PC-9 (cell line): ENCODE measurements at regions of chr9 and their contacts with region 1.

Region 1: GRCh38 chr9:112486221-112487007 is at the start of gene KIAA1958:
- DNase-seq: peak; percentile 71 to 89
- H3K4me3 ChIP-seq: peak within 1 kb of the TSS; percentile 81
- H3K27ac ChIP-seq: 0 out of 2 replicates have a peak within 1 kb of the TSS, but pooled peaks have one; percentile 17
- H3K4me1 ChIP-seq: peaks cover 21% of the 10 kb centered on the region
- H3K27me3 ChIP-seq: no peaks in the 10 kb centered on the region
- CTCF ChIP-seq: no peak
- total RNA-seq, gene KIAA1958: 19.5 and 19.8 TPM in 2 replicates

Region 2: GRCh38 chr9:112050544-112051475 is 435.6 kb before region 1 on chr9:
- CTCF ChIA-PET with region 1: no interaction called
- POLR2A ChIA-PET with region 1: no interaction called
- intact Hi-C with region 1: no loop called
- DNase-seq: no peak
- H3K4me3 ChIP-seq: no peak overlapping the region
- H3K27ac ChIP-seq: no peak overlapping the region
- H3K4me1 ChIP-seq: peaks cover 19% of the 10 kb centered on the region
- H3K27me3 ChIP-seq: no peaks in the 10 kb centered on the region
- CTCF ChIP-seq: no peak

Region 3: GRCh38 chr9:112556497-112557085 is 70.2 kb after region 1 on chr9:
- CTCF ChIA-PET with region 1: no interaction called
- POLR2A ChIA-PET with region 1: no interaction called
- intact Hi-C with region 1: loop called (anchors 2 kb)
- DNase-seq: peak; percentile 64 to 74
- H3K4me3 ChIP-seq: no peak overlapping the region
- H3K27ac ChIP-seq: peak overlapping the region; percentile 49
- H3K4me1 ChIP-seq: peaks cover 27% of the 10 kb centered on the region
- H3K27me3 ChIP-seq: no peaks in the 10 kb centered on the region
- CTCF ChIP-seq: no peak

Region 4: GRCh38 chr9:112629671-112630485 is 143.5 kb after region 1 on chr9:
- CTCF ChIA-PET with region 1: no interaction called
- POLR2A ChIA-PET with region 1: interaction called, 7 read pairs
- intact Hi-C with region 1: loop called (anchors 10 kb)
- DNase-seq: no peak
- H3K4me3 ChIP-seq: no peak overlapping the region
- H3K27ac ChIP-seq: no peak overlapping the region
- H3K4me1 ChIP-seq: no peaks in the 10 kb centered on the region
- H3K27me3 ChIP-seq: no peaks in the 10 kb centered on the region
- CTCF ChIP-seq: no peak

Region 5: GRCh38 chr9:112665347-112665746 is 178.9 kb after region 1 on chr9:
- CTCF ChIA-PET with region 1: no interaction called
- POLR2A ChIA-PET with region 1: no interaction called
- intact Hi-C with region 1: loop called (anchors 10 kb)
- DNase-seq: no peak
- H3K4me3 ChIP-seq: no peak overlapping the region
- H3K27ac ChIP-seq: no peak overlapping the region
- H3K4me1 ChIP-seq: no peaks in the 10 kb centered on the region
- H3K27me3 ChIP-seq: no peaks in the 10 kb centered on the region
- CTCF ChIP-seq: peak; percentile 36; the same call in 1 of the 2 replicates